GM12878 (cell line): ENCODE measurements at regions of chr15 and their contacts with region 1.

Region 1: DNA sequence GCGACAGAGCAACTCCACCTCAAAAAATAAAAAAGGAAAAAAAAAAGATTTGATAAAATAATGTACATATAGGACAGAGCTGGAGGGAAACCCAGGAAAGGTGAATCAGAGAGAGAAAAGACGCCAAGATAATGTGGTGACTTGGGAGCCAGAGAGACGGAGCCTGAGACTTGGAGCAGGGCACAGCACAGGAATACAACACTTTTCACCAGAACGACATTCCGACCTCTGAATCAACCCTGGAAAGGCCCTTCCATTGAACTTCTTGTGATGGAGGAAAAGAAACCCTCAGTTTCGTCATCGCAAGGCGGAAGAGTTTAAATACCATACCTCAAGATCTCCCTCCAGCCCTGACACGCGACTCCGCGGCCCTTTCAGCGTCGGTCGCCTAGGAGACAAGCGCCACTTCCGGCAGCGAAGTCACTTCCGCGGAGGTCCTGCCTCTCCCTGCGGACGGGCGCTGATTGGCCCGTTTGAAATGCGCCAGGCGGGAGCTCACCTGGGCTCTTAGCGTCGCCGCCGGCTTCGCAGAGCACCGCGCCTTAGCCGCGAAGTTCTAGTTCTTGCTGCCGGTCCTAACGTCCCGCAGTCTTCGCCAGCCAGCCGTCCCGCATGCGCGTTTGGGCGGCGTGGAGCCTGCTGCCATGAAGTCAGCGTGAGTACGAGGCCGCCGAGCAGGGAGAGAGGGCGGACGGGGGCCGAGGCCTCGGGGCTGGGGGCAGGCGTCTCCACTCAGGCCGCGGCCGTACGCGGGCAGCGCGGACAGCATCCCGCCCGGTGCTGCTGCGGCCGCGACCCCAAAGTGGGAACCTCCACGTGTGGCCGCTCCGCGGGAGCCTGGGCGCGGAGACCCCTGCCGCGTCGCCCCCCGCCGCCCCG is at the start of gene KIF23:
- DNase-seq: peak; percentile 73
- ATAC-seq: peak; percentile 96
- H3K4me3 ChIP-seq: peak within 1 kb of the TSS; percentile 92
- H3K27ac ChIP-seq: peak within 1 kb of the TSS; percentile 70
- H3K4me1 ChIP-seq: peaks cover 15% of the 10 kb centered on the region
- H3K27me3 ChIP-seq: no peaks in the 10 kb centered on the region
- CTCF ChIP-seq: no peak
- EP300 ChIP-seq: peak in 1 of 2 experiments; percentile 20; a peak in 1 of 4 replicates
- POLR2A ChIP-seq: peak; percentile 83
- RAD21 ChIP-seq: no peak
- polyA plus RNA-seq, gene KIF23: 28.0 to 32.8 TPM

Region 2: GRCh38 chr15:69452692-69453521 is 38.8 kb after region 1 on chr15 and contains the start of gene RPLP1:
- CTCF ChIA-PET with region 1: interaction called, 3 read pairs
- POLR2A ChIA-PET with region 1: interaction called, 8 read pairs
- RAD21 ChIA-PET with region 1: interaction called, 23 read pairs
- SMC1A ChIA-PET with region 1: interaction called, 5 read pairs
- in situ Hi-C with region 1: no loop called
- intact Hi-C with region 1: no loop called
- DNase-seq: peak; percentile 77
- ATAC-seq: peak; percentile 93
- H3K4me3 ChIP-seq: peak within 1 kb of the TSS; percentile 89
- H3K27ac ChIP-seq: peak within 1 kb of the TSS; percentile 79
- H3K4me1 ChIP-seq: peaks cover 5% of the 10 kb centered on the region; the same call in 1 of the 2 replicates
- H3K27me3 ChIP-seq: no peaks in the 10 kb centered on the region
- CTCF ChIP-seq: no peak
- EP300 ChIP-seq: no peak
- POLR2A ChIP-seq: peak; percentile 99
- RAD21 ChIP-seq: no peak
- polyA plus RNA-seq, gene RPLP1: 3,000 to 3,095 TPM

Region 3: DNA sequence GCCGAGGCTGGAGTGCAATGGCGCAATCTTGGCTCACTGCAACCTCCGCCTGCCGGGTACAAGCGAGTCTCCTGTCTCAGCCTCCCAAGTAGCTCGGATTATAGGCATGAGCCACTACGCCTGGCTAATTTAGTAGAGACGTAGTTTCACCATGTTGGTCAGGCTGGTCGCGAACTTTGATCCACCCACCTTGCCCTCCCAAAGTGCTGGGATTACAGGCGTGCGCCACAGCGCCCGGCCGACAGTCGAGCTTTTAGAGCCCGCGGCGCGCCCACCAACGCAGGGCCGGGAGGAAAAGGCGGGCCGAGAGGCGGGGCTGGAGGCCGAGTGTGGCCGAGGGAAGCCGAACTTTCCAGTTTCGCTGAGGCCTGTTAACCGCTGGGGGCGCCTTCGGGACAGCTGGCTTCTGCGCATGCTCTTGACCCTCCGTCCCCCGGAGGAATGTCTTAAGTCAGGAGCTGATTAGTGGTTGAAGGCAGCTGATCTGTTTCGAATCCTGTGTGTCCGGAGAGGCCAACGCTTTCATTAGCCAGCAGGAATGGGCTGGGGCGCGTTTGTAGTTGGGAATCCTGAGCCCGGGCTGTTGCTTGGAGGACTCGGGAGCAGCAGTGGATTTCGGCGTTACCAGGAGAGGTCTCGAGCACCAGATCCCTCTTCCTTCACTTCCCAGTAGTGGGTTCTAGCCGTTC is 48.6 kb after region 1 on chr15:
- CTCF ChIA-PET with region 1: interaction called, 15 read pairs
- POLR2A ChIA-PET with region 1: no interaction called
- RAD21 ChIA-PET with region 1: no interaction called
- SMC1A ChIA-PET with region 1: interaction called, 5 read pairs
- in situ Hi-C with region 1: no loop called
- intact Hi-C with region 1: no loop called
- DNase-seq: peak; percentile 83
- ATAC-seq: peak; percentile 97
- H3K4me3 ChIP-seq: peak overlapping the region; percentile 80
- H3K27ac ChIP-seq: peak overlapping the region; percentile 76
- H3K4me1 ChIP-seq: peaks cover 6% of the 10 kb centered on the region
- H3K27me3 ChIP-seq: no peaks in the 10 kb centered on the region
- CTCF ChIP-seq: peak; percentile 85 to 95 (median 86)
- EP300 ChIP-seq: no peak
- POLR2A ChIP-seq: peak; percentile 69
- RAD21 ChIP-seq: no peak